GM10248 (cell line): ENCODE measurements at regions of chr7 and their contacts with region 1.

Region 1: GRCh38 chr7:23013715-23014649 is at the start of gene HYCC1:
- DNase-seq: peak; percentile 95
- CTCF ChIP-seq: peak; percentile 63

Region 2: DNA sequence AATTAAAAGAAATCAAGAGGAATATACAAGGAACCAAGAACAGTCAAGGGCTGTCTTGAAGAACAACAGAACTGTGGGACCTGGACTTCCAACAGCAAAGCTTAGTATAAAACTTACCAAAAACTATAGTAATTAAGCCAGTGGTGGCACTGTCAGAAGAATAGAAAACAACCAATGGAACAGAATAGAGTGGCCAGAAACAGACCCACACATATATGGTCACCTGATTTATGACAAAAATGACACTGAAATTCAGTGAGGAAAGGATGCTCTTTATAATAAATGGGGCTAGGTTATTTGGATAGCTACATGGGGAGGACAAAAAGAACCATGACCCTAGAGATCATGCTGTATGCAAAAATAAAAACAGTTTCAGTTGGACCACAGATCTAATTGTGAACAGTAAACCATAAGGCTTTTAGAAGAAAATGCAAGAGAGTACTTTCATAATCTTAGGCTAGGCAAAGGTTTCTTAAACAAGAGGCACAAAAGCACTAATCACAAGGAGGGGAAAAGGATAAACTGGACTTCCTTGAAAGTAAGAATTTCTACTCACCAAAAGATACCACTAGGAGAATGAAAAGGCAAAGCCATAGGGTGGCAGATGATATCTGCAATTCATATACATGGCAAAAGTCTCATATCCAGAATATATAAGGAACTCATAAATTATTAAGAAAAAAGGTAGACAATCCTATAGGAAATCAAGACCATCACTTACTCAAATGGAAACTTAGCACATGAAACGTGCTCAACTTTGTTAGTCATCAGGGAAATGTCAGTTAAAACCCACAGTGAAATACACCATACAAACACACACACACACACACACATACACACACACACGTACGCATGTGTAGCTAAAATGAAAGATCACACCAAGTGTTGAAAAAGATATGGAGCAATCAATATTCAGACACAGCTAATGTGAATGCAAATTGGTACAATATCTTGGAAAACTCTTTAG is 20.8 kb before region 1 on chr7:
- CTCF ChIA-PET with region 1: interaction called, 18 read pairs
- POLR2A ChIA-PET with region 1: no interaction called
- DNase-seq: no peak
- CTCF ChIP-seq: no peak

Region 3: GRCh38 chr7:23026164-23026563 is 12.2 kb after region 1 on chr7:
- CTCF ChIA-PET with region 1: interaction called, 22 read pairs
- POLR2A ChIA-PET with region 1: no interaction called
- DNase-seq: no peak
- CTCF ChIP-seq: no peak